Right ventricle myocardium superior (tissue), 1 donor: ENCODE measurements at regions of chr11 and their contacts with region 1.

Region 1: DNA sequence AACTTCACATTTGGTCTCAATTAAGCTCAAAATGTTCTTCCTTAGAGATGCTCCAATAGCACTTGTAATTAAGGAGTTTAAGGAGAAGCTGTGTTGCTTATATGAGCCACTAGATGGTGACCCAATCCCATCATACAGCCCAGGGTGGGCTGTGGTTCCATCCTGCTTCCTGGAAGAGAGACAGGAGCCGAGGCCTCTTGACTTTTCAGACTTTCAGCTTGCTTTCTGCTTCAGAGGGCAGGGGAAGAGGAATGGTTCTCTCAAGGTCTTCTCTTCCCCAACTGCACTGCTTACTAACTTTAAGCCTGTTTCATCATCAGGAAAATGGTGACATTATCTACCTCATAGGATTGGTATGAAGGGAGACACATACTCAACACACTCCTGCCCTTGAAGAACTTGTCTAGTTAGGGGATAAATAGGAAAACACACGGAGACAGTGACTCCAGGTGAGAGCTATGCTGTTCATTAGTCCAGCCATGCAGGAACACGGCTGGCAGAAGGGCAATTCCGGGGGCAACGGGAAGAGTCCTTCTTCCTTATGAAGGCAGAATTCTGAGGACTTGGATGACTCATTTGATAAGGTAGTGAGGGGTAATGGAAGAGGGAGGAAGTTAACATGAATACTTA is 20.1 kb downstream of the TMEM218 start:
- DNase-seq: no peak
- ATAC-seq: peak; percentile 92

Region 2: DNA sequence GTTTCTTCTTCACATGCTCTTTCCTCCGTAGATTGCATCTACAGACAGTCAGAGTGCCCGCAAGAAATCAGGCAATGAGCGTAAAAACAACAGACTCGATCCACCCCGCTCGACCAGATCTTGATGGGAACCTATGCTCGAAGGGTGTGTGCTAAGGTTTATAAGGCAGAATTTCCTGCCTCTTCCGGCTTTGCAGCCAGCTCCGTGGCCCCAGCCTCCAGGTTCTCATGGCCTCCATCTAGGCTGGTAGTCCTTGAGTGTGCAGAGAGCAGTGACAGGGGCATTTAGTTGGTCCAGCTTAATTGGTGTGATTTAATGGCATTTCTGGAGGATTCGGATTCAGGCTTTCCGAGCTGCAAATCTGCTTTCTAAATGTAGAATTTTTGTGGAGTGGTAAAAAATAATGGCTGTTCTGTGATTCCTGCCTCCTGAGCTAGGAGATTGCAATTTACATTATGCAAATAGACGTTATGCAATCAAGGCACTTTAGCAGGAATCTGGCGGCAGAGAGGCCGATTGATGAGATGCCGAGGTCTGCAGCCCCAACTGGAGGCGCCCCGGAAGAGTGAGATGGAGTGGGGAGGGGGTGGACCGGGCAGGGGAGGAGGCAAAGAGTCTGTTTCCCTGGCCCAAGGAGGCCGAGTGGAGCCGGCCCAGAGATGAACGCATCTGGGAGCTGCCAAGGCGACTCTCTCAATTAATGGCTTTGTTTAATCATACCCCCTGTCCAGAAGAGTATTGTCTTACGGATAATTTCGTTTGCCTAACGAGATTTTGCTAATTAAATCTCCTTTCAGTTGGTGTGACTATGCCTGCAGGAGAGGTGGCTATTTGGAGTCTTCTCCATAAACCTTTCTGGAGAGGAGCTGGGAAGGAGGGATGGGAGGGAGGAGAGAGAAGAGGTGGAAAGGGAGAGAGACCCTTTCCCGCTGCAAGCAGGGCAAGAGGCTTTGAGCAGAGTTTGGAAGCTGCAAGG is 148.5 kb after region 1 on chr11:
- intact Hi-C with region 1: no loop called
- DNase-seq: no peak
- ATAC-seq: no peak

Region 3: GRCh38 chr11:125345421-125346178 is 254.2 kb after region 1 on chr11:
- intact Hi-C with region 1: loop called (anchors 5 kb)
- DNase-seq: peak; percentile 88
- ATAC-seq: peak; percentile 89